H1 (cell line): ENCODE measurements at regions of chr12 and their contacts with region 1.

Region 1: DNA sequence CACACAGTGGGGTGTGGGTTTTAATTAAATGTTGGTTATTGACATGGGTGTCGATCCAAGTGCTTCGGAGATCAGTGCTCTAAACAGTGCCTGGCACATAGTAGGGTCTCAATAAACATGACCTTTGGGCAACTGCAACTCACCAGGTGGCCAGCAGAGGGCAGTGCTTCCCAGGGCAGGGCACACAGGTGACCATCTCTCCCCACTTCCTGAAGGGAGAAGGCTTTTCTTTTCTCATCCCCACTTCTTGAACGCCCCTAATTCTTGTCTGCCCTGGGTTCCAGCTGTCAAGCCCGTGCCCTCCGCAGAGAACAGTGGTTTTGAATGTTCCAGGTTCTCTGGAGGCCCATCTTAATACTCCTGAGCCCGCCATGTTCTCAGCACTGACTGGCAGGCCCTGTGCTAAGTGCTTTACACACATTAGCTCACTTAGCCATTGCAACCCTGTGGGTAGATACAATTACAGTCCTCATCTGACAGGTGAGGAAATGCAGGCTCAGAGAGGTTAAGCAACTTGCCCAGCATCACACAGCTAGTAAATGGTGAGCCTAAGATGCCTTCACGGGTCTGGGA is 16.3 kb downstream of the RAPGEF3 start:
- DNase-seq: peak in 1 of 2 experiments; percentile 97
- H3K4me3 ChIP-seq: no peak overlapping the region
- H3K27ac ChIP-seq: no peak overlapping the region
- H3K4me1 ChIP-seq: peaks cover 0 to 10% (median 2%) of the 10 kb centered on the region in 4 experiments; a peak in 4 of 7 replicates
- H3K27me3 ChIP-seq: no peaks in the 10 kb centered on the region
- CTCF ChIP-seq: peak in 2 of 3 experiments; percentile 93 to 98; a peak in 3 of 4 replicates
- EP300 ChIP-seq: no peak
- POLR2A ChIP-seq: no peak
- RAD21 ChIP-seq: peak; percentile 91 to 93

Region 2: DNA sequence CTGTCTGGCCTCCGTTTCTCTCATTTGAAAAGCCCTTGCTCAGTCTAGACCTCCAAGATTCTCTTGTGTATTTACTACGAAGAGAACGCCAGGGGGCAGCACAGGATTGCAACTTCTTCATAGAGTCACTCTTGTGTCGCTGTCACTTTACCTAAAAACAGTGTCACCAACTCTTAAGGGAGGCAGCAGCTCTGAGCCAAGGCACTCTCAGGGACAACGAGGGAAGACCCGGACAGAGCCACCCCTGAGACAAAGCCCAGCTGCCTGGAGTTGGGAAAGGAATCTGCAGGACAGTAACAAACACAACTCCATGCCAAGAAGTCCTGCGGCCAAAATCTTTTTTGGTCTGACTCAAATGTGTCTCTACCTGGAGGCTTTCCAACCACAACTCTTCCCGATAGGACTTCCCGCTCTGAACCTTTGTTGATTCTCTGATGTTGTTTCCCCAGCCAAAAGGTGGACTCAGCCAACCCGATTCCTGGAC is 26.9 kb before region 1 on chr12:
- CTCF ChIA-PET with region 1: interaction called, 892 read pairs
- POLR2A ChIA-PET with region 1: interaction called, 4 read pairs
- DNase-seq: peak in 1 of 2 experiments; percentile 79
- H3K4me3 ChIP-seq: no peak overlapping the region
- H3K27ac ChIP-seq: no peak overlapping the region
- H3K4me1 ChIP-seq: peaks cover 4 to 9% (median 8%) of the 10 kb centered on the region in 4 experiments; a peak in 5 of 7 replicates
- H3K27me3 ChIP-seq: peaks cover 0 to 7% (median 3%) of the 10 kb centered on the region in 4 experiments; a peak in 3 of 7 replicates
- CTCF ChIP-seq: peak in 2 of 3 experiments; percentile 77 to 84; a peak in 3 of 4 replicates
- EP300 ChIP-seq: no peak
- POLR2A ChIP-seq: no peak
- RAD21 ChIP-seq: peak; percentile 84 to 88

Region 3: DNA sequence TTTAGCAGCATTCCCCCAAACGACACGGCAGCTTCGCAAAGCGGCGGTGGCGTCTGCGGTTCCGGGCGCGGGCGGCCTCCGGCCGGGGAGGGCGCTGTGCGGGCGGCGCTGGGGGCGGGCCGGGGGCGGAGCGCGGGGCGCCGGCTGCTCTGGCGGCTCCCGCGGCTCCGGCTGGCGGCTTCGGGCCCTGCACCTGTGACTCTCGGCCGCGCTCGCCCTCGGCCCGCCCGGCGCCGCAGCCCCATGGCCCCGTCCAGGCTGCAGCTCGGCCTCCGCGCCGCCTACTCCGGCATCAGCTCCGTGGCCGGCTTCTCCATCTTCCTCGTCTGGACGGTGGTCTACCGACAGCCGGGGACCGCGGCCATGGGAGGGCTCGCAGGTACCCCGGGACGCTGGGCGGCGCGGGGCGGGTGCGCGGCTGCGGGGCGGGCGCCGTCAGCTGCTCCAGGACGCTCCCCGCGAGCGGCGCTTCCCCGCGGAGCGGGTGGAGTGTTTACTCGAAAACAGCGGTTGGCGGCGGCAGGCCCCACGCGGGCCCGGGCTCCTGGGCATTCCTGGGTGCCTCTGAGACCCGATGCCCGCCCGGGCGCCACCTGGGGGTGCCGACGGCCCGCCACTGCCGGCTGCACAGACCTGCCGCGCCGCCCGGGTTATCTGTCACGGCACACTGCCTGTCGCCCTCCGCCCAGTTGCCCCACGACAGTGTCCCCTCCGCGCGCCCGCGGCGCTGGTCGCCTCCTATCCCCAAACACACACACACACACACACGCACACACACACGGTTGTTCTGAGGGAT is 30.9 kb after region 1 on chr12 and contains the start of gene SLC48A1:
- CTCF ChIA-PET with region 1: interaction called, 2,442 read pairs
- POLR2A ChIA-PET with region 1: interaction called, 79 read pairs
- DNase-seq: peak in 1 of 2 experiments; percentile 85
- H3K4me3 ChIP-seq: peak within 1 kb of the TSS; percentile 55 to 91 (median 56)
- H3K27ac ChIP-seq: no peak within 1 kb of the TSS
- H3K4me1 ChIP-seq: peaks cover 9 to 17% (median 12%) of the 10 kb centered on the region in 4 experiments
- H3K27me3 ChIP-seq: peaks cover 0 to 17% (median 8%) of the 10 kb centered on the region in 4 experiments; a peak in 4 of 7 replicates
- CTCF ChIP-seq: peak in 2 of 3 experiments; percentile 38 to 55; a peak in 3 of 4 replicates
- EP300 ChIP-seq: no peak
- POLR2A ChIP-seq: no peak
- RAD21 ChIP-seq: 0 out of 4 replicates have a peak, but pooled peaks of 1 of the 2 experiments have one; percentile 2
- total RNA-seq, gene SLC48A1: 14.0 and 14.1 TPM in 2 replicates

Region 4: DNA sequence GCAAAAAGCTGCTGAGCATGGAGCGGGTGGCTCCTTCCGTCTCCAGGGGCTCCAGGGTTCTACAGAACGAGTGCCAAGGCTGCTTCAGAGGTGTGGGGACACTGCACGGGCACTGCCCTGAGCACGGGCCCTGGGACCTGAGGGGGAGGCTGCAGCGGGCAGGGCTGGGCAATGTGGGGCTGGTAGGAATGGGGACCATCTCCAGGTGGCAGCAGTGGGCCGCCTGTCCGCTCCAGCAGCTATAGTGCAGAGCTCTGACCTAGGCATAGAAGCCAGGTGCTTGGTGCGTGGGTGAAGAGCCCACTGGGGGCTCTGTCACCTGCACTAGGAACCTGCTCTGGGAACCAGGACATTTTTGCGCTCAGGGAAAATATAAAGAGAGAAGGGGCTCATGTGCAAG is 55.1 kb after region 1 on chr12:
- CTCF ChIA-PET with region 1: interaction called, 2,442 read pairs
- POLR2A ChIA-PET with region 1: no interaction called
- DNase-seq: peak in 1 of 2 experiments; percentile 71
- H3K4me3 ChIP-seq: no peak overlapping the region
- H3K27ac ChIP-seq: no peak overlapping the region
- H3K4me1 ChIP-seq: peaks cover 0 to 13% (median 3%) of the 10 kb centered on the region in 4 experiments; a peak in 5 of 7 replicates
- H3K27me3 ChIP-seq: no peaks in the 10 kb centered on the region
- CTCF ChIP-seq: peak; percentile 76 to 92 (median 78)
- EP300 ChIP-seq: no peak
- POLR2A ChIP-seq: no peak
- RAD21 ChIP-seq: peak; percentile 84 to 90

Region 5: DNA sequence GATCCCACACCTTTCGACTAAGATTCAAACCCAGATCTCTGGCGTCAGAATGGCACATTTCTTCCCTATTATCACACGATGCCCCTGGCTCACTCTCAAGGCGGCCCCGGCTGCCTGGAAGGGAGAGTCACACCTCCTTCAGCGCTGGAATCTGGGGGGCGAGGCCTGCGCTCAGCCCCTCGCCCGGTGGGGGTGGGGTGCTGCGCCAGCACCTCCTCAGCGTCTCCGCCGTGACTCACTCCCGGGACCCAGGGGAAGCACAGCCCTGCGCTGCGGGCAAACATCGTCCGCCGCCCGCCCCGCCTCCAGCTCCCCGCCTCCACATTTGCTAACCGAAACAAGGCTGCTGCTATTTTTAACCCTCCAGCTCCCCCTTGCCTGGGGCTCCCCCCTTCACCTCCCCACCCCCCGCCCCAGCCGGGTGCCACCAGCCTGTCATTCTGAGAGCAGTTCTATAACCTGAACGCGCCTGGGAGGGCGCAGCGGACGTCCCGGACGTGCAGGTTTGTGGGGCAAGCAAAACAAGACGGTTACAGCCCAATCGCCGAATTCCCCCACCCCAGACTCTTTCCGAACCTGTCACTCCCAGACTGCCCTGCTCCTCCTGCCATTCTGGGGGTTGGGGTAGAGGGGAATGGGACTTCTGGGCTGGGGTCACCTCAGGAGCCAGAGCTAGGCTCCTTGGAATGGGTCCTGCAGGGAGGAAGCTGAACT is 70.6 kb after region 1 on chr12:
- CTCF ChIA-PET with region 1: interaction called, 34 read pairs
- POLR2A ChIA-PET with region 1: no interaction called
- DNase-seq: peak; percentile 81 to 83
- H3K4me3 ChIP-seq: peak overlapping the region; percentile 14 to 55 (median 40); a peak in 7 of 8 replicates
- H3K27ac ChIP-seq: peak overlapping the region; percentile 79
- H3K4me1 ChIP-seq: peaks cover 28 to 72% (median 58%) of the 10 kb centered on the region in 4 experiments
- H3K27me3 ChIP-seq: no peaks in the 10 kb centered on the region
- CTCF ChIP-seq: no peak
- EP300 ChIP-seq: peak in 1 of 2 experiments; percentile 77; a peak in 1 of 3 replicates
- POLR2A ChIP-seq: no peak
- RAD21 ChIP-seq: no peak

Region 6: GRCh38 chr12:47828608-47829536 is 86.5 kb after region 1 on chr12:
- CTCF ChIA-PET with region 1: interaction called, 296 read pairs
- POLR2A ChIA-PET with region 1: no interaction called
- DNase-seq: no peak
- H3K4me3 ChIP-seq: no peak overlapping the region
- H3K27ac ChIP-seq: no peak overlapping the region
- H3K4me1 ChIP-seq: peaks cover 5 to 14% (median 9%) of the 10 kb centered on the region in 4 experiments
- H3K27me3 ChIP-seq: no peaks in the 10 kb centered on the region
- CTCF ChIP-seq: no peak
- EP300 ChIP-seq: no peak
- POLR2A ChIP-seq: no peak
- RAD21 ChIP-seq: no peak

Region 7: DNA sequence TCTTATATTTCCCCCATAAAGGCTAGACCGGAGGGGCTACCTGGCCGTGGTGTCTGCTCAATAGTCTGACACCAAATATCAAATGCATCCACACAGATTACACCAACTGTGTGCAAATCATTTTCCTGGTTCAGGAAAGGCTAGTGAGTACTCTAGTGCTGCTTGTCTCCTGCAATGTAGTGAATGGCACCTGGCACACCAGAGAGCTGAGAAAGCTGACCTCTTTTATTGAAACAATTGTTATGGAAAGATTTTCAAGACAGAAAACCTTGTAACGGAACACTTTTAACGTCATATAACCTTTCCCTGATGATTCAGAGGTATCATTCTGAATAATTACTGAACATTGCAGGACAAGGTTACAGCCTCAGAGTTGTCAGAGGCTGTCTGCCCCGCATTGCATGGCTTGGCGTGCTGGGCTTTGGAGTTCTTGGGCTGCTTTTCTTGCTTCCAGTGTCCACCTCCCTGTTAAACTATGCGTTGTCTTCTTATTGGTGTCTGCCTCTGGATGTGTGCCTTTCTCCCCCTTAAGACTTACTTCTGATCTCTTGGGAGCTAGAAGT is 118.0 kb after region 1 on chr12:
- CTCF ChIA-PET with region 1: no interaction called
- POLR2A ChIA-PET with region 1: no interaction called
- DNase-seq: no peak
- H3K4me3 ChIP-seq: no peak overlapping the region
- H3K27ac ChIP-seq: no peak overlapping the region
- H3K4me1 ChIP-seq: no peaks in the 10 kb centered on the region
- H3K27me3 ChIP-seq: no peaks in the 10 kb centered on the region
- CTCF ChIP-seq: no peak
- EP300 ChIP-seq: no peak
- POLR2A ChIP-seq: no peak
- RAD21 ChIP-seq: no peak

Region 8: GRCh38 chr12:48021485-48022179 is 279.3 kb after region 1 on chr12:
- CTCF ChIA-PET with region 1: no interaction called
- POLR2A ChIA-PET with region 1: no interaction called
- DNase-seq: peak; percentile 74 to 97
- H3K4me3 ChIP-seq: no peak overlapping the region
- H3K27ac ChIP-seq: no peak overlapping the region
- H3K4me1 ChIP-seq: peaks cover 6 to 9% (median 7%) of the 10 kb centered on the region in 4 experiments
- H3K27me3 ChIP-seq: peaks cover 85 to 97% (median 97%) of the 10 kb centered on the region in 4 experiments
- CTCF ChIP-seq: no peak
- EP300 ChIP-seq: peak in 1 of 2 experiments; percentile 54; a peak in 1 of 3 replicates
- POLR2A ChIP-seq: no peak
- RAD21 ChIP-seq: peak in 1 of 2 experiments; percentile 33; a peak in 2 of 4 replicates